ENCODE measurements at regions of chr5 and their contacts with region 1.

Region 1: DNA sequence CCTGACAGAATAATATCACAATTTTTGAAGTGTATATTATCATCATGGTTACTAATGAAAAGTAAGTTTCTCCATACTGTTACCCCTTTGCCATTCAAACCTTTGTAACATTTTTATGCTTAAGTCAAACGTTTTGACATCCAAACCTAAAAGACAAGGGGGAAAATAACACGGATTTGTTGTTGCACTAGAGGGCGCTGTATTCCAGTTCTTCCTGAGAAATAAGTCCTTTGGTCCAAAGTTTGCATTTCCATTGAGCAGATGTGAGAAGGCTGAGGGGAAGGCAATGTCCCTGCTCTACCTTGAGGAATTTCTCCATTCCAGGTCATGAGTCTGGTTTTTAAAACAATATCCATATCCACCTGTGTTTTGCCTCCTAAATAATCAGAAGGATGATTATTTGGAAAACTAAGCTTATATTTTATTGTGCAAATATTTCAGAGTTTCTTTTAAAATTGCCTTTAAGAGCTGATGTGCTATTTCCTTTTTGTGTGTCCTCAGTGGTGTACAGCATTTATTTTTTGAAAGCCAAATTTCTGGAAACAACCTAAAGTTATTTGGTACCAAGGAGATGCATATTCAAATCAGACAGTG is 9.7 kb downstream of the LECT2 start:
- DNase-seq: peak in 3 of 10 donors; percentile 19 to 62 (median 26)
- H3K4me3 ChIP-seq: no peak overlapping the region
- H3K27ac ChIP-seq: no peak overlapping the region
- H3K27me3 ChIP-seq: peaks cover 0 to 17% (median 0%) of the 10 kb centered on the region in 45 donors
- CTCF ChIP-seq: peak; percentile 69 to 96 (median 84)

Region 2: GRCh38 chr5:136073714-136074529 is 128.9 kb after region 1 on chr5:
- intact Hi-C with region 1: loop called in 1 of 2 experiments (anchors 10 kb)
- DNase-seq: no peak
- H3K4me3 ChIP-seq: no peak overlapping the region
- H3K27ac ChIP-seq: no peak overlapping the region
- H3K27me3 ChIP-seq: peaks cover 0 to 27% (median 4%) of the 10 kb centered on the region in 45 donors
- CTCF ChIP-seq: no peak

Region 3: DNA sequence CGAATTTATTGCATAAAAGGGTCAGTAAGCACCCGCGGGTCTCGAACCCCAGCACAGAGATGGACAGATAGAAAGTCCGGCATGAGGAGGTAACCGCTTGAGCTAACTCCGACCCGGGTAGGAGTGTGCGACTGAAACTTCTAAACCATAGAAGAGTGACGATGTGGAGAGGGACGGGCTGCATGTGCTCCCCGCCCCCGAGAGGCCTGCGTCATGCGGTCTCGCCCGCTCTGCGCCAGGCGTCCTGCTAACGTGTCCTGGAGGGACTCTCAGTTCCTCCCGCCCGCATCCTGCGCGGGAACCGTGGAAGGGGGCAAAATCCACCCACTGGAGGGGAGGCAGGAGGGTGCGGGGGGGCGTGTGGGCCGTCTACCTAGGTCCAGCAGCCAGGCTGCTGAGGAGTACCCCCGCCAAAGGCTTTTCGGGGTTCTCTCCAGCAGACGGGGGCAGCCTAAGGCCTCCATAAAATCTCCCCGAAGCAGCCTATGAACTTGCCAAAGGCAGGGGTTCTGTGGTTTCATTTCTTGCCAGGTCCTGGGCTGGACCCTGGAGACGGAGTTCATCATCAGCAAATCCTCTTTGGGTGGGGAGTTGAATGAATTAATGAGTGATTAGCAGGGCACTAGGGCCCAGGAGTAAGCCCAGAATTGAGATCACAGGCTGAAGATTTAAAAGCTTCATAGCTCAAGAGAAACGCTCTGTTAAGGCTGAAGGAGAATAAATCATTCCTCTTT is 135.6 kb after region 1 on chr5:
- intact Hi-C with region 1: loop called (anchors 10 kb)
- DNase-seq: peak in 7 of 10 donors; percentile 17 to 81 (median 54)
- H3K4me3 ChIP-seq: peak overlapping the region; percentile 5 to 71 (median 48)
- H3K27ac ChIP-seq: peak overlapping the region in 7 of 59 donors; percentile 1 to 55 (median 49)
- H3K27me3 ChIP-seq: peaks cover 0 to 43% (median 10%) of the 10 kb centered on the region in 45 donors
- CTCF ChIP-seq: peak in 1 of 56 donors; percentile 7

Region 4: DNA sequence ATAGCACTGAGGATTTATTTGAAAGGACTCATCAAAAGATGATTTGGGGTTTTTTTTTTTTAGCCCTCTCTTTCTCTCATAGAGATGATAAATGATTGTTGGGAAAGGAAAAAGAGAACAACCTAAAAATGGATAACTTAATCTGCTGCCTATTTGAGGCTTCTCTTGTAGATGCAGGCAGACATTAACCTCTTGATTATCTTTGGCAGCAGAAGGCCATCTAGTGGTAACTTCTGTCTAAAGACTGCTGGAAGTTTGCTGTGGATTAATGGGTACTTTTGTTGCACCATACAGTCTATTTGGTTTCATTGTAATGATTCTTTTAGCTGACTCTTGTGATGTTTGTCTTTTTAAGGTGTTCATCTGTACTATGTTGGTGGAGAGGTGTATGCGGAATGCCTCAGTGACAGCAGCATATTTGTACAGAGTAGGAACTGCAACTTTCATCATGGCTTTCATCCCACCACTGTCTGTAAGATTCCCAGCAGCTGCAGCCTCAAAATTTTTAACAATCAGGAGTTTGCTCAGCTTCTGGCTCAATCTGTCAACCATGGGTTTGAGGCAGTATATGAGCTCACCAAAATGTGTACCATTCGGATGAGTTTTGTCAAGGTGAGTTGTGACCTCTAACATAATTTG is 229.1 kb after region 1 on chr5:
- intact Hi-C with region 1: loop called (anchors 2 to 5 kb)
- DNase-seq: no peak
- H3K4me3 ChIP-seq: no peak overlapping the region
- H3K27ac ChIP-seq: no peak overlapping the region
- H3K27me3 ChIP-seq: no peaks in the 10 kb centered on the region
- CTCF ChIP-seq: peak in 55 of 56 donors; percentile 34 to 86 (median 73)

Region 5: GRCh38 chr5:136212252-136212721 is 267.2 kb after region 1 on chr5:
- intact Hi-C with region 1: loop called (anchors 2 to 10 kb)
- DNase-seq: peak in 6 of 10 donors; percentile 31 to 56 (median 50)
- H3K4me3 ChIP-seq: no peak overlapping the region
- H3K27ac ChIP-seq: no peak overlapping the region
- H3K27me3 ChIP-seq: peaks cover 0 to 25% (median 2%) of the 10 kb centered on the region in 45 donors
- CTCF ChIP-seq: peak; percentile 64 to 97 (median 90)

Region 6: DNA sequence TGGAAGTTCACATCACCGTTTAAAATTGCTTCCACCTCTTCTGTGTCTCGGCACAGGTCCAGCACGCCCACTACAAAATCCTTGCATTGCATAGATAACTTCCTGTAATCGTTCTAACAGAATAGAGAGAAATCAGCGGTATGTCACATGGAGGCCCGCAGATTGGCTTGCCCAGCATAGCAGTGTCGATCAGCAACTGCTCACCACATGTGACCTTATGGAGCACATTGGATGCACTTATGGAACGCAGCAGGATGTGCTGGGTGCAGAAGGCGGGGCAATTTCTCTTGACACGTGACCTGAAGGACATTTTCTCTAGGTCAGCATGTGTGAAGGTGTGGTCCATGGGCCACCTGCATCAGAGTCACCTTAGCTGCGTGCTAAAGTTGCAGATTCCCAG is 370.6 kb after region 1 on chr5:
- intact Hi-C with region 1: no loop called
- DNase-seq: no peak
- H3K4me3 ChIP-seq: no peak overlapping the region
- H3K27ac ChIP-seq: no peak overlapping the region
- H3K27me3 ChIP-seq: peaks cover 0 to 16% (median 0%) of the 10 kb centered on the region in 45 donors
- CTCF ChIP-seq: no peak